Left ventricle myocardium superior (tissue), 1 donor: ENCODE measurements at regions of chr14 and their contacts with region 1.

Region 1: DNA sequence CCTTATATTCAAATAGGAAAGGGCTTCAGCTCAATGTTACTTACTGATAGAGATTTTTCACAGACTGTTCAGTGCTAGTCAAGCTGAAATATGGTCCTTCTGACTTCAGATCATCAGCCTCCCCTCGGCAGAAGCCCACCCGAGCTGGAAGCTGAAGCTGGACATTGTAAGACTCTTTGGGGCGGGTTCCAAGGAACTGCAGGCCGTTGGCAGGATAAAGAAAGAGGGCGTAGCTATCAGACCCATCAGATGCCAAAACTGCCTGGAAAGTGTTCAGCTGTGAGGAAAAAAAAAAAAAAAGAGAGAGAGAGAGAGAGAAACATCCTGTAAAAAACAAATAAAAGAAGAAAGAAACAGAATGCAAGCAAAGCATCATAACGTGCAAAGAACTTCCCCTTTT is 8.8 kb downstream of the NID2 start:
- DNase-seq: peak; percentile 39
- ATAC-seq: peak; percentile 17

Region 2: DNA sequence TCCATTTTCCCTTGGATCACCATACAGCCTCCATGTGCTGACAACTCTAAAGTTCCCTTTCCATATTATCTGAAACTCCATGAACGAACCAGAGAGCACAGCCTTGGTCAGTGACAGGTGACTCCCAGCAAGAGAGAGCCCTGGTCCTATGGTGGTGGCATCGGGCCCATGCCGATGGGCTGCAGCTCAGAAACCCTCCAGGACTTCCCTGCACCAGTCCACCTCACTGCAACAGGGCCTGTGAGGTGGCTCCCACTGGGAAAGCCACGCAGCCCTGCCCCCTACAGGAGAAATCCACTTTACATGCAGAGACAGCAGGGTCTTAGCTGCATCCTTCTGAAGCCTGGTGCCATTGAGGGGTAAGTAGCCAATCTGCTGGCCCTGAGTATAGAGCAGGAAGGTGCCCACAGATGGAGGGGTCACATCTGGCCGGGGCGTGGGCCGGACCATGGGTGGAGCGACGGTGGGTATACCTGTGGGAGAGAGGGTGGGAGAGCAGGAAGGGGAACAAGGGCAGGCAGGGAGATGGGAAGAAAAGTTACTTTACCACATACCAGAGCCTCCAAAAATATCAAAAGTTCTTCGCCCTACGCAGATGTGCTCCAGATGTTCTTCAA is 46.0 kb before region 1 on chr14:
- intact Hi-C with region 1: loop called (anchors 5 kb)
- DNase-seq: peak; percentile 70
- ATAC-seq: peak; percentile 52

Region 3: DNA sequence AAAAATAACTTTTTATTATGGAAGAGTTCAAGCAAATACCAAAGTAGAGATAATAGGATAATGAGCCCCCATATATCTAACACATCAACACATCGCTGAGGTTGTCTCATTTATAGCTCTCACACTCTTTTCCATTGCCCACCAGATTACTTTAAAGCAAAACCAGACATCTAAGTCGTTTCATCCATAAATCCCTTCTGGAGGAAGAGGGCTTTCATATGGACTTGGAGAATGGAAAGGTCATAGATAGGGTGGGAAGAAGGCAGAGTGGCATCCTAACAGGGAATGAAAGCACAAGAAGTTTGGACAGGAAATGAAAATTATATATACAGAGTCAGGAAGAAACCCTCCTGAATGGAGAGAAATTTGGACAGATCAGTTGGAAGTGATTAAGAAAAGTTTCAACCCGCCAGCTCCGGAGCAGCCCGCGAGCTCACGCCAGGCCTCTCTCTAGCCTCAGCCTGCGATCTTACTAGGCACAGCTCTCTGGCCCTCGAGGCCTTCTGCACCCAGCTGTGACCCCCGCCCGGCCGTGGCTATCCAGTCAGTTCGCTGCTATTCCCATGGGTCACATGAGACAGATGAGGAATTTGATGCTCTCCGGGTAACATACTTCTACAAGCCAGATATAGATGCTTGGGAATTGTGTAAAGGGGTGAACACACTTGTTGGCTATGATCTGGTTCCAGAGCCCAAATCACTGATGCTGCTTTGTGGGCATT is 57.2 kb after region 1 on chr14:
- intact Hi-C with region 1: no loop called
- DNase-seq: peak; percentile 43
- ATAC-seq: peak; percentile 30